K562 (cell line): ENCODE measurements at regions of chr12 and their contacts with region 1.

Region 1: GRCh38 chr12:94101738-94102660 is 46.4 kb upstream of the PLXNC1 start:
- DNase-seq: peak; percentile 72 to 91 (median 78)
- ATAC-seq: peak; percentile 79
- H3K4me3 ChIP-seq: peak overlapping the region; percentile 41
- H3K27ac ChIP-seq: no peak overlapping the region
- H3K4me1 ChIP-seq: peaks cover 14 to 18% of the 10 kb centered on the region in 2 experiments
- H3K27me3 ChIP-seq: no peaks in the 10 kb centered on the region
- CTCF ChIP-seq: peak; percentile 80 to 93 (median 91)
- EP300 ChIP-seq: no peak; the same call in 1 of the 2 replicates
- POLR2A ChIP-seq: no peak
- RAD21 ChIP-seq: peak; percentile 91 to 92

Region 2: DNA sequence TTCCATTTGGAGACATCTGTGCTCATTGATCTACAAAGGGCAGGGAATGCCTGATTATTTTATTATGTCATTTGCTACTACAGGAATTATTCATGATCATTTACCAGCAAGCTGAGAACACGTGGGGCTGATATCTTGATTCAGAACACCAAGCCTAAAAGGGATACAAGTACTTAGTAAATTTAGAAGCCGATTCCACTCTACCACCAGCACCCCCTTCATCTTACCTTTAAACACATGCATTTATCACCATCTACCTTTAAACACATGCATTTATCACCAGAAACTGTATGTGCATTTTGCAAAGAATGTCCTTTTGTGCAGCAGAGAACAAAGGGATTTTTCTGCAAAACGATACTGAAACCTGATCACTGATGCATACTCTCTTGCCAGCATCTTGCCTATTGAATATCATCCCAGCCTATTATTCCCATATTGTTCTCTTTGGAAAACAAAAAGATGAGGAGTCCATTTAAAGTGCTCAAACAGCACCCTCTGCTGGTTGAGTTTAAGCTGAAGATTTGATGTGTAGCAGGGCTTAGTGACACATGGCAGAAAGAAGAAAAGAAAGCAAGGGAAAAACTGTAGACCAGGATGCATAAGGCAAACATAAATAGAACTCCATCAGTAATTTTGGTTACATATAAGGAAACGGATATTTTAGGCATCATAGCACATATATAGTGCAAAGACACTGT is 1531.8 kb before region 1 on chr12:
- CTCF ChIA-PET with region 1: no interaction called
- POLR2A ChIA-PET with region 1: no interaction called
- in situ Hi-C with region 1: no loop called
- intact Hi-C with region 1: loop called (anchors 10 kb)
- DNase-seq: peak; percentile 44 to 84 (median 47)
- ATAC-seq: peak; percentile 85
- H3K4me3 ChIP-seq: no peak overlapping the region
- H3K27ac ChIP-seq: no peak overlapping the region
- H3K4me1 ChIP-seq: no peaks in the 10 kb centered on the region
- H3K27me3 ChIP-seq: no peaks in the 10 kb centered on the region
- CTCF ChIP-seq: peak; percentile 53 to 77 (median 73); a peak in 5 of 6 replicates
- EP300 ChIP-seq: no peak
- POLR2A ChIP-seq: no peak
- RAD21 ChIP-seq: peak; percentile 97 to 98

Region 3: DNA sequence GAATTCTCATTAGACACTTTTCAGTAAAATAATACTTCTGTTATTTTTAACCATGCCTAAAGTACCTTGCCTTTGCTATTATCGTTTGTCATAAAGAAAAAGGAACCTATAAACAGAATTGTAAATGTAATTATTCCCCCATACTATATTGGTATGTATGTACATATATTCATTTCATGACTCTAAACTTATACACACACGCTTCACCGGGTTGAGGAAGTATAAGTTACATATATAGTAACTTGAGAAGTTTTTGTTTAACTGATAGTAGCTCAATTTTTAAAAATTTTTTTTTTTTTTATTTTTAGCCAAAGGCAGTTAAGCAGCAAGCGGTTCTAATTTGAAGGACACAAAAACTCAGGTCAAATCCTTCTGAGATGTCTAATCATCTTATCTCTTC is 1291.6 kb before region 1 on chr12:
- CTCF ChIA-PET with region 1: no interaction called
- POLR2A ChIA-PET with region 1: no interaction called
- in situ Hi-C with region 1: no loop called
- intact Hi-C with region 1: no loop called
- DNase-seq: no peak
- ATAC-seq: no peak
- H3K4me3 ChIP-seq: no peak overlapping the region
- H3K27ac ChIP-seq: no peak overlapping the region
- H3K4me1 ChIP-seq: no peaks in the 10 kb centered on the region
- H3K27me3 ChIP-seq: no peaks in the 10 kb centered on the region
- CTCF ChIP-seq: no peak
- EP300 ChIP-seq: no peak
- POLR2A ChIP-seq: no peak
- RAD21 ChIP-seq: no peak

Region 4: DNA sequence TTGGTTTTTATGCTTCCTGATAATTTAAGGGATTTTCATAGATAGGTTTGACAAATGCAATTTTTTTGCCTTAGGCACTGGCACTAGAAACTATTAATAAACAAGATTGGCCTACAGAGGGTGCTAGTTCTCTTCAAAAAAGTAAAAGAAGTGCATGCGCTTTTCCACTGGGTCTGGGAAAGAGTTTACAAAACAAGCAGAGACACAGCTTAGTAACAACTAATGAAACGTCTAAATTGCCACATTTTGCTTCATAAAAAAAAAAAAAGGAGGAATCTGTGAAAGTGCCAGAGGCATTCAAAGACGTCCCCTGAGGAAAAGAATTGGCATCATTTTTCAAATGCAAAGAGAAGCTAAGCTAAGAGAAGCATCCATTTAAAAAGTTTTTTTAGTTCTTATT is 1114.6 kb before region 1 on chr12:
- CTCF ChIA-PET with region 1: no interaction called
- POLR2A ChIA-PET with region 1: no interaction called
- in situ Hi-C with region 1: loop called (anchors 10 kb)
- intact Hi-C with region 1: loop called (anchors 2 kb)
- DNase-seq: peak; percentile 48 to 76 (median 56)
- ATAC-seq: peak; percentile 91
- H3K4me3 ChIP-seq: no peak overlapping the region
- H3K27ac ChIP-seq: no peak overlapping the region
- H3K4me1 ChIP-seq: peaks cover 0 to 12% of the 10 kb centered on the region in 2 experiments; a peak in 1 of 5 replicates
- H3K27me3 ChIP-seq: no peaks in the 10 kb centered on the region
- CTCF ChIP-seq: peak; percentile 42 to 80 (median 47); a peak in 4 of 6 replicates
- EP300 ChIP-seq: no peak
- POLR2A ChIP-seq: no peak
- RAD21 ChIP-seq: peak; percentile 85 to 88

Region 5: DNA sequence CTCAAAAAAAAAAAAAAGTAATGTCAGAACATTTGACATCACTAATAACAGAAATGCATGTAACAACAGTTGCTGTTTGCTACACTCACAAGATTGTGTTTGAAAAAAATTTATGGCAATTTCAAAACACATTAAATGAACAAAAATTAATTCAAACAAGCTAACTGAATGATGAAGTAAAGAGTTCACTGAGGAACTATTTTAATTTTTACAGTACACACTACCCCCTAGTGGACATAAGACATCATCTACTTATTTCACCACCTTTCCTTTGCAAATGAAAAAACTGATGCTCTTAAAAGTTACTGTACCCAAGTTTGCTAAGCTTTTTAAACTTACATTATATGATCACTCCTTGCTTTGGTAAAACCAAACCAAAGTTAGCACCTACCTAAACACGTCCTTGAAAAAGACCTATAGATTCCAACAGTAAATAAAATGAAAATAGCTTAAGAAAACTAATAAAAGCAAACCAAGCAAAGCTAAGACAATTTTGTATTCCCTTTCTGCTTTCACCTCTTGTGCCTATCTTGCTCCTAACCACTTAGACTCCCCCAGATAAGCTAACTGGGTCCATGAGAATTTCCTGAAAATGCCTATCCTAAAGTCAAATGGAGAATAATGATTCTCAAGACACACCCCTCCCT is 682.5 kb before region 1 on chr12:
- CTCF ChIA-PET with region 1: no interaction called
- POLR2A ChIA-PET with region 1: no interaction called
- in situ Hi-C with region 1: loop called (anchors 10 kb)
- intact Hi-C with region 1: loop called (anchors 10 kb)
- DNase-seq: peak; percentile 34 to 53 (median 46)
- ATAC-seq: peak; percentile 77
- H3K4me3 ChIP-seq: no peak overlapping the region
- H3K27ac ChIP-seq: no peak overlapping the region
- H3K4me1 ChIP-seq: peaks cover 3 to 14% of the 10 kb centered on the region in 2 experiments; a peak in 2 of 5 replicates
- H3K27me3 ChIP-seq: no peaks in the 10 kb centered on the region
- CTCF ChIP-seq: peak; percentile 7 to 71 (median 27); a peak in 4 of 6 replicates
- EP300 ChIP-seq: no peak
- POLR2A ChIP-seq: no peak
- RAD21 ChIP-seq: peak; percentile 65 to 77

Region 6: GRCh38 chr12:93569656-93570551 is 532.1 kb before region 1 on chr12:
- CTCF ChIA-PET with region 1: interaction called, 24 read pairs
- POLR2A ChIA-PET with region 1: interaction called, 11 read pairs
- in situ Hi-C with region 1: no loop called
- intact Hi-C with region 1: loop called (anchors 1 kb)
- DNase-seq: peak; percentile 85 to 98 (median 90)
- ATAC-seq: peak; percentile 80
- H3K4me3 ChIP-seq: peak overlapping the region; percentile 93
- H3K27ac ChIP-seq: peak overlapping the region; percentile 96
- H3K4me1 ChIP-seq: peaks cover 11 to 47% of the 10 kb centered on the region in 2 experiments; a peak in 4 of 5 replicates
- H3K27me3 ChIP-seq: no peaks in the 10 kb centered on the region
- CTCF ChIP-seq: peak; percentile 74 to 84 (median 83)
- EP300 ChIP-seq: peak; percentile 84
- POLR2A ChIP-seq: no peak
- RAD21 ChIP-seq: peak; percentile 76 to 86

Region 7: DNA sequence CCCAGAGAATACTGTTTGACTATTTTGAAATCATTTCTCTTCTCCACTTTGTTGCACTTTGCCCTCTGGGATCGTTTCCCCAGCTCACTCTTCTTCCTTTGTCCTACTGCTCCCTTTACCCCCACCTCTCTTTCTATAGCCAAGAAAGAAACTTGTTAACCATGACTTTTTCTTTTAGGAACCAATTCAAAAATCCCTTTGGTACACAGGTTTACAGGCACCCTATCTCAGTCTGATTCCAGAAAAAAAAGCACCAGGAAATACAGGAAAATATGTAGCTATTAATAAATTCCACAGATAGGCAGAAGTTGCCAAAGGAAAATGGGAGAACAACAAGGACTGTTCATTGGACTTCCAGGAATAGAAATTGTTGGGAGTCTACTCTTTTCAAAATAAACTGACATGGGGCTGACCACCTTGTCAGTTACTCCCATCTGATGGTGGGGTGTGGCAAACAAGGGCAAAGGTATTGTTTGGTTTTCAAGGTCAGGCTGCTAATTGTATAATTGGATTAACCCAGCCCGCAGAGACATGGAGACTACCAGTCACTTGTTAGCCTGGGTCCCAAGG is 342.4 kb before region 1 on chr12:
- CTCF ChIA-PET with region 1: interaction called, 3 read pairs
- POLR2A ChIA-PET with region 1: interaction called, 3 read pairs
- in situ Hi-C with region 1: loop called (anchors 5 kb)
- intact Hi-C with region 1: no loop called
- DNase-seq: peak in 1 of 4 experiments; percentile 35
- ATAC-seq: no peak
- H3K4me3 ChIP-seq: no peak overlapping the region
- H3K27ac ChIP-seq: peak overlapping the region; percentile 84
- H3K4me1 ChIP-seq: peaks cover 24 to 81% of the 10 kb centered on the region in 2 experiments
- H3K27me3 ChIP-seq: no peaks in the 10 kb centered on the region
- CTCF ChIP-seq: no peak
- EP300 ChIP-seq: no peak
- POLR2A ChIP-seq: no peak
- RAD21 ChIP-seq: no peak

Region 8: GRCh38 chr12:93868771-93869170 is 233.2 kb before region 1 on chr12:
- CTCF ChIA-PET with region 1: no interaction called
- POLR2A ChIA-PET with region 1: no interaction called
- in situ Hi-C with region 1: no loop called
- intact Hi-C with region 1: no loop called
- DNase-seq: no peak
- ATAC-seq: no peak
- H3K4me3 ChIP-seq: no peak overlapping the region
- H3K27ac ChIP-seq: no peak overlapping the region
- H3K4me1 ChIP-seq: no peaks in the 10 kb centered on the region
- H3K27me3 ChIP-seq: no peaks in the 10 kb centered on the region
- CTCF ChIP-seq: no peak
- EP300 ChIP-seq: no peak
- POLR2A ChIP-seq: no peak
- RAD21 ChIP-seq: no peak

Region 9: GRCh38 chr12:93979189-93979588 is 122.8 kb before region 1 on chr12:
- CTCF ChIA-PET with region 1: interaction called, 4 read pairs
- POLR2A ChIA-PET with region 1: interaction called, 3 read pairs
- in situ Hi-C with region 1: no loop called
- intact Hi-C with region 1: loop called (anchors 2 kb)
- DNase-seq: peak in 1 of 4 experiments; percentile 50
- ATAC-seq: peak; percentile 56
- H3K4me3 ChIP-seq: no peak overlapping the region
- H3K27ac ChIP-seq: no peak overlapping the region
- H3K4me1 ChIP-seq: peaks cover 0 to 12% of the 10 kb centered on the region in 2 experiments; a peak in 3 of 5 replicates
- H3K27me3 ChIP-seq: no peaks in the 10 kb centered on the region
- CTCF ChIP-seq: peak; percentile 42 to 73 (median 55); a peak in 4 of 6 replicates
- EP300 ChIP-seq: no peak
- POLR2A ChIP-seq: no peak
- RAD21 ChIP-seq: peak; percentile 79 to 94

Region 10: DNA sequence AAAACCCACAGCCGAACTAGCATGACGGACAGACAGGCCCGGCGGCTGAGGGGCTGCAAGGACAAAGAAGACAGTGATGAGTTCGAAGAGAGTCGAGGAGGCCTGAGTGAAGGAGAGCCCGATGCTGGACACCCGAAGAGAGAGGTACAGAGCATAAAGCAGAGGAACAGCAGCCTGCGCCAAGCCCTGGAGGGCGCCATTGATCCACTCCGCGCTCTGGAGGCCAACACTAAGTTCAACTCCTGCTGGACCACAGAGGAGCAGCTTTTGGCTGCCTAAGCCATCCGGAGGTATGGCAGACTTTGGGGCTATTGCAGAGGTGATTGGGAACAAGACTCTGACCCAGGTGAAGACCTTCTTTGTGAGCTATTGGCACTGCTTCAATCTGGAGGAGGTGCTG is 38.6 kb after region 1 on chr12:
- CTCF ChIA-PET with region 1: no interaction called
- POLR2A ChIA-PET with region 1: no interaction called
- in situ Hi-C with region 1: no loop called
- intact Hi-C with region 1: no loop called
- DNase-seq: peak; percentile 31 to 71 (median 40)
- ATAC-seq: peak; percentile 95
- H3K4me3 ChIP-seq: no peak overlapping the region
- H3K27ac ChIP-seq: no peak overlapping the region
- H3K4me1 ChIP-seq: peaks cover 9 to 10% of the 10 kb centered on the region in 2 experiments; a peak in 3 of 5 replicates
- H3K27me3 ChIP-seq: peaks cover 16 to 49% of the 10 kb centered on the region in 2 experiments; a peak in 4 of 5 replicates
- CTCF ChIP-seq: peak; percentile 78 to 87 (median 81)
- EP300 ChIP-seq: no peak
- POLR2A ChIP-seq: no peak
- RAD21 ChIP-seq: peak; percentile 84 to 93